Endothelial cell of umbilical vein (primary cell): ENCODE measurements at regions of chr5 and their contacts with region 1.

Region 1: GRCh38 chr5:135466178-135467050 is 14.3 kb upstream of the TIFAB start:
- DNase-seq: peak; percentile 62
- H3K4me3 ChIP-seq: no peak overlapping the region
- H3K27ac ChIP-seq: no peak overlapping the region
- H3K4me1 ChIP-seq: peaks cover 3% of the 10 kb centered on the region
- H3K27me3 ChIP-seq: peaks cover 38 to 50% of the 10 kb centered on the region in 2 experiments
- CTCF ChIP-seq: peak; percentile 84 to 94
- POLR2A ChIP-seq: no peak

Region 2: GRCh38 chr5:134555890-134556311 is 910.5 kb before region 1 on chr5:
- CTCF ChIA-PET with region 1: no interaction called
- POLR2A ChIA-PET with region 1: no interaction called
- dilution Hi-C with region 1: no loop called
- intact Hi-C with region 1: no loop called
- DNase-seq: peak; percentile 91
- H3K4me3 ChIP-seq: no peak overlapping the region
- H3K27ac ChIP-seq: peak overlapping the region; percentile 88
- H3K4me1 ChIP-seq: peaks cover 56% of the 10 kb centered on the region
- H3K27me3 ChIP-seq: no peaks in the 10 kb centered on the region
- CTCF ChIP-seq: no peak
- POLR2A ChIP-seq: no peak

Region 3: GRCh38 chr5:135445306-135445985 is 21.0 kb before region 1 on chr5:
- CTCF ChIA-PET with region 1: interaction called, 14 read pairs
- POLR2A ChIA-PET with region 1: no interaction called
- dilution Hi-C with region 1: no loop called
- intact Hi-C with region 1: no loop called
- DNase-seq: no peak
- H3K4me3 ChIP-seq: no peak overlapping the region
- H3K27ac ChIP-seq: no peak overlapping the region
- H3K4me1 ChIP-seq: no peaks in the 10 kb centered on the region
- H3K27me3 ChIP-seq: peaks cover 2 to 5% of the 10 kb centered on the region in 2 experiments
- CTCF ChIP-seq: no peak
- POLR2A ChIP-seq: no peak

Region 4: DNA sequence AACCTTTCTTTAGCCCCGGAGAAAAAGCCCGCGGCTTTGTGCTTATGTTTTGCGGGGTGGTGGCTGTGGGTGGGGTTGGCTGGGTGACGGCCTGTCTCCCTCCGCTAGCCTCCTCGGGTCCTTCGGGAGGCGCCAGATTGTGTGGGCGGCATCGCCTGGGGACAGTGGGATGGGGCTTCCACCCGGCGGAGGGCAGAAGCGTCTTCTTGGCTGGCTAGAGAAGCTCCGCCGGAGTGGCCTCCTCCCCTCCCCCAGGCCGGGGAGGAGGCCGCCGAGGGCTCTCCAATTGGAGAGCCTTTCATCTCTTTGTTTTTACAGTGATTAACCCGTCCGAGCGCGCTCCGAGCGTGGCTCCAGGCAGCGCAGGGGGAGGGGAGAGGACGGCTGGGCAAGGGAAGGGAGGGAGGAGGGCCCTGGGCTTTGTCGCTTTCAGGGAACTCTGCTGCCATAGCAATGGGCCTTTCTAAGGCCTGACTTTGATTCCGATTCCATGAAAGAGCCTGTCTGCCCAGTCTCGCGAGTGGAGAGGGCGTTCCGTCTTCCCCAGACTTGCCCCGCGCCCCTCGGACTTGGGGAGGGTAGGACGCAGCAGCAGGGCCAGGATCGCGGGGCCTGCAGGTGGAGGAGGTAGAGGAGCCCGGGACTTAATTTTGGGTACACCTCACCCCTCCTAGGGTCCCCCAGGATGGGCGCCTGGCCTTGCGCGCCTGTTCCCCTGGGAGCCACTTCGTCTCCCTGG is 22.5 kb after region 1 on chr5:
- CTCF ChIA-PET with region 1: interaction called, 23 read pairs
- POLR2A ChIA-PET with region 1: no interaction called
- dilution Hi-C with region 1: no loop called
- intact Hi-C with region 1: no loop called
- DNase-seq: peak; percentile 11
- H3K4me3 ChIP-seq: no peak overlapping the region
- H3K27ac ChIP-seq: no peak overlapping the region
- H3K4me1 ChIP-seq: peaks cover 3% of the 10 kb centered on the region
- H3K27me3 ChIP-seq: peaks cover 70 to 71% of the 10 kb centered on the region in 2 experiments
- CTCF ChIP-seq: no peak
- POLR2A ChIP-seq: no peak

Region 5: DNA sequence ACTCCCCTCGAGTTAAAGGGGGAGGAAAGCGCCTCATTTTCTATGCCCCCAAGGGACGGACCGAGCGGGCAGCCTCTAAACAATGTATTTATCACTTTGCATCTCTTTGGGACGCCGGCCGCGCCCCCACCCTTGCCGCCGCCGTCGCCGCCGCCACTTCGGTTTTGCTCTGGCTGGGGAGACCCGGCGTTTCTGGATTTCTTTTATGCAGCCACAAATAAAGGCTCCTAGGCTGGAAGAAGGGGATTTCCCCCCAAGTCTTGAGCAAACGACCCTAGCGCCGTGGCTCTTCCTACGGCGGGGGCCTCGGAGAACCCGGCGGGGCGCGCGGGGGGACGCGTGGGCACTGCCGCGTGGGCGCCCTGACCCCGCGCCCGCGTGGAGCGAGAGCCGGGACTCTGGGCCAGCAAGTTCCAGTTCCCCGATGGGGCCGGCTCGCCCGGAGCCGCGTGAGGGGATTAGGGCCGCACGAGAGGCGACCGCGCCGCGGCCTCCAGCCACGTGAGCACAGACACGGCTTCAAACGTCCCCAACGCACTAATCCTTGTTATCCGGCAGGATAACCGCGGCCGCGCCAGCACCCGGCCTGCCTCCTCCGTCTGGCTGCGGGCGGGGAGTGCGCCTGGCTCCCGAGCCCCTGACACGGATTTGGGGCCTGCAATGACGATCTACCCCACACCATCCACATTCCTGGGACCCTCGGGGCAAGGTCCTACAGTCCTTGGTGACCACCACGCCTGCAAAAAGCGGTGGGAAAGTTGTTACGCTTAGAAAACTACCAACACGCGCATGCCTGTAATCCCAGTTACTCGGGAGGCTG is 77.3 kb after region 1 on chr5:
- CTCF ChIA-PET with region 1: interaction called, 661 read pairs
- POLR2A ChIA-PET with region 1: no interaction called
- dilution Hi-C with region 1: no loop called
- intact Hi-C with region 1: no loop called
- DNase-seq: no peak
- H3K4me3 ChIP-seq: peak overlapping the region in 1 of 3 experiments; percentile 4
- H3K27ac ChIP-seq: no peak overlapping the region
- H3K4me1 ChIP-seq: peaks cover 6% of the 10 kb centered on the region
- H3K27me3 ChIP-seq: peaks cover 86 to 96% of the 10 kb centered on the region in 2 experiments
- CTCF ChIP-seq: no peak
- POLR2A ChIP-seq: no peak

Region 6: GRCh38 chr5:135560858-135561257 is 94.4 kb after region 1 on chr5:
- CTCF ChIA-PET with region 1: interaction called, 664 read pairs
- POLR2A ChIA-PET with region 1: no interaction called
- dilution Hi-C with region 1: loop called (anchors 25 kb)
- intact Hi-C with region 1: loop called (anchors 1 kb)
- DNase-seq: peak; percentile 54
- H3K4me3 ChIP-seq: no peak overlapping the region
- H3K27ac ChIP-seq: no peak overlapping the region
- H3K4me1 ChIP-seq: no peaks in the 10 kb centered on the region
- H3K27me3 ChIP-seq: peaks cover 10 to 21% of the 10 kb centered on the region in 2 experiments
- CTCF ChIP-seq: peak; percentile 83 to 84
- POLR2A ChIP-seq: no peak

Region 7: DNA sequence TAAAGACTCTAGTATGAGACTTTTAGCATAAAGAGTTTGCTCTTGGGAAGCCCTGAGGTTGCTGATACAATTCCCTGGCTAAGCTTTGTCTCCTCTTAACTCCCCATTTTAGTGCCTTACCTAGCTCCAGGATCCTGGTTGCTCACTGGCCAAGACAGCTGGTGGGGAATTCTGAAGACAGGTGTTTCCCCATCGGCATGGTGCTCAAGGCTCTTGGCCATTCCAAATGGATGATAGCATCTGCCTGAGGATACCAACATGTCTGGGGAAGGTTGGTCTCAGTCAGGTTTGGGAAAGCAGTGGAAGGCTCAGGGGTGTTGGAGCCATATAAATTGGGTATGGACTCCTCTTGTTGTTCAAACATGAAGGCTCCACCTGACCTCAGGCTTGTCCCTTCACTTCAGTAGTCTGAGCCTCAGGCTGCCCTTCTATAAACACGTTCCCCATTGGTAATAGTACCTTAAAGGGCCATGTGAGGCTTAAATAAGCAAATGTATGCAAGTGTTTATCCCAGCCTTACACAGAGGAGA is 156.8 kb after region 1 on chr5:
- CTCF ChIA-PET with region 1: no interaction called
- POLR2A ChIA-PET with region 1: no interaction called
- dilution Hi-C with region 1: no loop called
- intact Hi-C with region 1: no loop called
- DNase-seq: no peak
- H3K4me3 ChIP-seq: no peak overlapping the region
- H3K27ac ChIP-seq: no peak overlapping the region
- H3K4me1 ChIP-seq: no peaks in the 10 kb centered on the region
- H3K27me3 ChIP-seq: no peaks in the 10 kb centered on the region
- CTCF ChIP-seq: no peak
- POLR2A ChIP-seq: no peak

Region 8: GRCh38 chr5:135829681-135830383 is 363.4 kb after region 1 on chr5:
- CTCF ChIA-PET with region 1: interaction called, 16 read pairs
- POLR2A ChIA-PET with region 1: no interaction called
- dilution Hi-C with region 1: no loop called
- intact Hi-C with region 1: loop called (anchors 1 kb)
- DNase-seq: peak; percentile 40
- H3K4me3 ChIP-seq: no peak overlapping the region
- H3K27ac ChIP-seq: no peak overlapping the region
- H3K4me1 ChIP-seq: no peaks in the 10 kb centered on the region
- H3K27me3 ChIP-seq: peaks cover 1 to 4% of the 10 kb centered on the region in 2 experiments
- CTCF ChIP-seq: peak; percentile 81 to 85
- POLR2A ChIP-seq: no peak